Ascending aorta (tissue), 2 donors: ENCODE measurements at regions of chr14 and their contacts with region 1.

Region 1: DNA sequence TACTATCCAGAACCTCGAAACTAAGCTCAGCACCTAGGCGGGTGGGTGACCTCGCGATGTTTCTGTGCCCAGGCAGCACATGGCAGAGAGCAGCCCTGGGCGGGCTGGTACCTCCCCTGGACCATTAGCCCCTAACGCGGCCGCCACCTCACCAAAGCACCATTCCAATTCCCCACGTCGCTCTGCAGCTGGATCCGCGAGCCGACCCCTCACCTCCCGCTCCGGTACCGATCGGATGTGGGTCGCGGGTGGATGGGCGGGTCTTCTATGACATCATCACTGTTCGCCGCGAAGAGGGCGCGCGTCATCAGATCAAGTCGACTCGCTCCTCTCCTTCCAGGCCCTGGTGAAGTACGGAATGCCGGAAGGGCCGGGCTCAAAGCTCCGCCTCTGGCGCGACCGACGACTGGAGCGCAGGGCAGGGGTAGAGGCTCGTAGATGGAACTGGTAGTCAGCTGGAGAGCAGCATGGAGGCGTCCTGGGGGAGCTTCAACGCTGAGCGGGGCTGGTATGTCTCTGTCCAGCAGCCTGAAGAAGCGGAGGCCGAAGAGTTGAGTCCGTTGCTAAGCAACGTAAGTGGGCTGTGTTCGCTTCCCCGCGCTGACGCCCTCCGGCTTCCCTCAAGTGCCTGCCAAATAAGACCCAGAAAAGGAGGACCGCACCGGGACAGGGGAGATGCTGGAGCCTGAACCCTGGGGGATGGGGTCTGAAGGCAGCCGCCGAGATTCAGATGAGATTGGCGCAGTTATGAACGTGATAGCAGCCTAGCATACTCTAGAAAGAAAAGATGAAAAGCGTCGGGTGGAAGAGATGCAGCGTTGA is at the starts of genes SLC38A6 and TRMT5:
- DNase-seq: peak; percentile 75 to 98
- H3K4me3 ChIP-seq: peak within 1 kb of the TSS; percentile 67 to 84
- H3K27ac ChIP-seq: peak within 1 kb of the TSS; percentile 85 to 87
- H3K4me1 ChIP-seq: peaks cover 0 to 11% of the 10 kb centered on the region in 2 donors
- H3K27me3 ChIP-seq: no peaks in the 10 kb centered on the region
- CTCF ChIP-seq: no peak
- total RNA-seq, gene SLC38A6: 1.8 TPM
- total RNA-seq, gene TRMT5: 3.5 TPM

Region 2: GRCh38 chr14:60648934-60649874 is 331.8 kb before region 1 on chr14 and contains the start of gene SIX1:
- intact Hi-C with region 1: loop called (anchors 5 kb)
- DNase-seq: peak in 1 of 2 donors; percentile 76
- H3K4me3 ChIP-seq: peak within 1 kb of the TSS; percentile 59 to 71
- H3K27ac ChIP-seq: peak within 1 kb of the TSS; percentile 2 to 6
- H3K4me1 ChIP-seq: peaks cover 0 to 30% of the 10 kb centered on the region in 2 donors
- H3K27me3 ChIP-seq: peaks cover 30% of the 10 kb centered on the region
- CTCF ChIP-seq: no peak
- total RNA-seq, gene SIX1: 1.1 TPM

Region 3: GRCh38 chr14:60724137-60724619 is 256.8 kb before region 1 on chr14 and contains the start of gene SIX4:
- intact Hi-C with region 1: loop called (anchors 1 kb)
- DNase-seq: peak; percentile 16 to 83
- H3K4me3 ChIP-seq: peak within 1 kb of the TSS; percentile 75 to 76
- H3K27ac ChIP-seq: peak within 1 kb of the TSS; percentile 73 to 77
- H3K4me1 ChIP-seq: no peaks in the 10 kb centered on the region
- H3K27me3 ChIP-seq: no peaks in the 10 kb centered on the region
- CTCF ChIP-seq: no peak
- total RNA-seq, gene SIX4: 1.4 TPM

Region 4: GRCh38 chr14:61188978-61189808 is 208.2 kb after region 1 on chr14:
- intact Hi-C with region 1: loop called (anchors 5 kb)
- DNase-seq: peak in 1 of 2 donors; percentile 79
- H3K4me3 ChIP-seq: peak overlapping the region; percentile 46 to 54
- H3K27ac ChIP-seq: peak overlapping the region; percentile 63 to 65
- H3K4me1 ChIP-seq: peaks cover 8 to 16% of the 10 kb centered on the region in 2 donors
- H3K27me3 ChIP-seq: no peaks in the 10 kb centered on the region
- CTCF ChIP-seq: peak; percentile 55 to 83 (median 59)

Region 5: GRCh38 chr14:61252369-61253063 is 271.5 kb after region 1 on chr14:
- intact Hi-C with region 1: loop called (anchors 1 kb)
- DNase-seq: peak; percentile 50 to 86
- H3K4me3 ChIP-seq: no peak overlapping the region
- H3K27ac ChIP-seq: no peak overlapping the region
- H3K4me1 ChIP-seq: no peaks in the 10 kb centered on the region
- H3K27me3 ChIP-seq: no peaks in the 10 kb centered on the region
- CTCF ChIP-seq: peak; percentile 72 to 82 (median 77)